B cell (primary cell): ENCODE measurements at regions of chr3 and their contacts with region 1.

Region 1: DNA sequence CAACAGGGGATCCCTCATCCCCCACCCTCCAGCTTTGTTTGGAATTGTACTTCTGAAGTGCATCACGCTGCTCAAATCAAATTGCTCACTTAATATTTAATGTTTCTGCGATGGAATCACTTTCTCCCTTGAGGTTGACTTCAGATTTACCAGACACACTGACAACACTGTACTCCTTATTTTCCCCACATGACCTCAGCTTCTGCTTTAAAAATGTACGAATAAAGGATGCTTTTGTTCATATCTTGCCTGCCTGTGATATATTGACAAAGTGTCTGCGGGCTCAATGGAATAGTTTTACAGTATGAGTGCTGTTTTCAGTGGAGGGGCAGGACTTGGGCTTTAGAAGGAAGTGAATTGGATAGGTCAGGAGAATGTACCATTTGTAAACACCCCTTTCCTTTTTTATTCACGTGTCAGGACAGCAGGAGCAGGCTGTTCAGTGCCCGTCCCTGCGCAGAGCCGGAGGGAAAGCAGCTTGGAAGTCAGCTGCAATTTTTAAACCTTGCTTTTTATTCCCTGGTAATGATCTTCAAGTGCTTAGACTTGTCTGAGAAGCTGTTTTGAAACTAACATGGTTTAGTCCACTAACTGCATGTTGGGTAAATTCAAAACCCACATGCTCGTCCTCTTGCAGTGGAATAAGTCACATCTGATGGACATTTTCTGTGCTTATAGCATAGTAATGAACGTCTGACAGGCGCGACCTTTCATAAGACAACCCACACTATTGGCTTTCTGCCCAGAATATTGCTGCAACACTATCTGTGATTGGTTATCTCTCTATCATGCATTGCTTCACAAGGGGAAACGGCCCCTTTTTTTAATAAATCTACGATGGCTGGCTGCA is 29.9 kb downstream of the MBNL1 start:
- DNase-seq: peak; percentile 77
- ATAC-seq: peak; percentile 76
- H3K4me3 ChIP-seq: peak overlapping the region in 1 of 5 experiments; percentile 47
- H3K4me3 Mint-ChIP-seq: peak overlapping the region; percentile 79
- H3K27ac ChIP-seq: peak overlapping the region; percentile 16 to 61
- H3K27ac Mint-ChIP-seq: peak overlapping the region; percentile 86
- H3K4me1 ChIP-seq: peaks cover 47 to 75% of the 10 kb centered on the region in 2 donors
- H3K4me1 Mint-ChIP-seq: peaks cover 73% of the 10 kb centered on the region
- H3K27me3 ChIP-seq: no peaks in the 10 kb centered on the region
- H3K27me3 Mint-ChIP-seq: no peaks in the 10 kb centered on the region
- CTCF ChIP-seq: no peak

Region 2: DNA sequence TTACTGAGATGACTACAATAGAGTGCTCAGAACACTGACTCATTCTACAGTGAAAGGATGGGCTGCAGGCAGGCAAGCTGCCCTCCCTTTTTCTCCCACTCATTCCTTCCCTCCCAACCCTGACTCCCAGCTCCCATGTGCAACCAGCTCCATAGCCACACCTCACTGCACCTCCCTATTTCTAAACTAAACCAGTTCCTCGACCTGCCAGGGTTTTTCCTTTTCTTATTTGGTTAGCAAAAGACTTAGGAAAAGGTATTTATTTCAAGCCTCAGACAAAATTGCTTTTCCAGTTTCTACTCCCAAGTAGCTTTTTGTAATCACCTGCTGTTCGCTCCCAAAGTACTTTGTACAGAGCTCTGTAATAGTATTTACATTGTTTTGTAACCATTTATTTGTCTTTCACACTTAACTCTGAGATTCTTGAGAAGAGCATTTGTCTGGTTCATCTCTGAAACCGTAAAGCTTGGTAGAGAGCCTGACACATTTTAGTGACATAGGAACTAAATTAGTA is 482.5 kb before region 1 on chr3:
- CTCF ChIA-PET with region 1: no interaction called
- POLR2A ChIA-PET with region 1: no interaction called
- intact Hi-C with region 1: no loop called
- DNase-seq: no peak
- ATAC-seq: no peak
- H3K4me3 ChIP-seq: no peak overlapping the region
- H3K4me3 Mint-ChIP-seq: no peak overlapping the region
- H3K27ac ChIP-seq: no peak overlapping the region
- H3K27ac Mint-ChIP-seq: no peak overlapping the region
- H3K4me1 ChIP-seq: no peaks in the 10 kb centered on the region
- H3K4me1 Mint-ChIP-seq: no peaks in the 10 kb centered on the region
- H3K27me3 ChIP-seq: no peaks in the 10 kb centered on the region
- H3K27me3 Mint-ChIP-seq: peaks cover 15% of the 10 kb centered on the region
- CTCF ChIP-seq: no peak

Region 3: DNA sequence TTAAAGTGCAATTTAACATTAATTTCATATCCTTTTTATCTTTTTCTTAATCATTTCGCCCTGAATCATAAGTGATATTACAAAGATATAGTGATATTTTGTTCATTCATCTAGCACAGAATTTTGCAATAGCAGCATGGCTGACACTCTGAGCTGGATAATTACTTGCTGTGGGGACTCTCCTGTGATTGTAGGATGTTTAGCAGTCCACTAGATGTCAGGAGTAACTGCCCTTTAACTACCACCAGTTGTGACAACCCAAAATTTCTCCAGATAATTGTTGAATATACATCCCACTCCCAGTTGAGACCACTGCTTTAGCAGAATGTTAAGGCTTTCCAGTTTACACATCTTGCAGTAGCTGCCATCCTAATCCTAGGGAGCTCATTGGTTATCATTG is 226.7 kb before region 1 on chr3:
- CTCF ChIA-PET with region 1: no interaction called
- POLR2A ChIA-PET with region 1: no interaction called
- intact Hi-C with region 1: loop called (anchors 10 kb)
- DNase-seq: peak; percentile 30
- ATAC-seq: no peak
- H3K4me3 ChIP-seq: no peak overlapping the region
- H3K4me3 Mint-ChIP-seq: no peak overlapping the region
- H3K27ac ChIP-seq: no peak overlapping the region
- H3K27ac Mint-ChIP-seq: no peak overlapping the region
- H3K4me1 ChIP-seq: no peaks in the 10 kb centered on the region
- H3K4me1 Mint-ChIP-seq: no peaks in the 10 kb centered on the region
- H3K27me3 ChIP-seq: peaks cover 0 to 3% (median 0%) of the 10 kb centered on the region in 4 experiments
- H3K27me3 Mint-ChIP-seq: no peaks in the 10 kb centered on the region
- CTCF ChIP-seq: peak; percentile 49

Region 4: GRCh38 chr3:152127058-152127457 is 171.6 kb before region 1 on chr3:
- CTCF ChIA-PET with region 1: no interaction called
- POLR2A ChIA-PET with region 1: no interaction called
- intact Hi-C with region 1: no loop called
- DNase-seq: no peak
- ATAC-seq: no peak
- H3K4me3 ChIP-seq: no peak overlapping the region
- H3K4me3 Mint-ChIP-seq: no peak overlapping the region
- H3K27ac ChIP-seq: no peak overlapping the region
- H3K27ac Mint-ChIP-seq: no peak overlapping the region
- H3K4me1 ChIP-seq: no peaks in the 10 kb centered on the region
- H3K4me1 Mint-ChIP-seq: peaks cover 4% of the 10 kb centered on the region
- H3K27me3 ChIP-seq: no peaks in the 10 kb centered on the region
- H3K27me3 Mint-ChIP-seq: no peaks in the 10 kb centered on the region
- CTCF ChIP-seq: no peak

Region 5: DNA sequence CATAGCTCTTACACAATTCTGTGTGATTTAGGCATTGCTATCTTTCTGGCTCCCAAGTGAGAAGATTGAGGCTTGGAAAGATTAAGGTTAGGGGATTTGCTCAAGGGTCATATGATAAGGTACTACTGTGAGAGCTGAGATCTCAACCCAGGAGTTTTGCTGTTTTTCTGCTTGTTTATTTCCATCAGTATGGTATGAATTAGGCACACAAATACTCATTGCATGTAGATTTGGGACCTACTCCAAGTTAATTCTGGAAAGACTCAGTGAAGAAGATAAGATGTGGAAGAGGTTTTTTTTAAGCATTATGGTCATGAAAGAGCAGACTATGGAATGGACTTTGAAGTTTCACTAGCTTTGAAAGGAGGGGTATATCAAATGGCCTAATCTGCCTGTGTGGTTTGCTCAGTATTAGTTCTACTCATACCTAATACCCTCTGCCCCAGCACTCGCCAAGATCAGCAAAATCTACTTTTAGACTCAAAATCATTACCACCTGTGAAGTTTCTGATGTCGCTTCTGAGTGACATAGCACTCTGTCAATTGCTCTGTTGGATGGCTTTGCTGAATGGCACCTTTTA is 17.4 kb before region 1 on chr3:
- CTCF ChIA-PET with region 1: no interaction called
- POLR2A ChIA-PET with region 1: no interaction called
- intact Hi-C with region 1: loop called (anchors 2 kb)
- DNase-seq: no peak
- ATAC-seq: no peak
- H3K4me3 ChIP-seq: peak overlapping the region in 1 of 5 experiments; percentile 5
- H3K4me3 Mint-ChIP-seq: peak overlapping the region; percentile 68
- H3K27ac ChIP-seq: peak overlapping the region in 1 of 2 donors; percentile 73
- H3K27ac Mint-ChIP-seq: peak overlapping the region; percentile 62
- H3K4me1 ChIP-seq: peaks cover 63 to 90% of the 10 kb centered on the region in 2 donors
- H3K4me1 Mint-ChIP-seq: peaks cover 79% of the 10 kb centered on the region
- H3K27me3 ChIP-seq: no peaks in the 10 kb centered on the region
- H3K27me3 Mint-ChIP-seq: no peaks in the 10 kb centered on the region
- CTCF ChIP-seq: no peak

Region 6: DNA sequence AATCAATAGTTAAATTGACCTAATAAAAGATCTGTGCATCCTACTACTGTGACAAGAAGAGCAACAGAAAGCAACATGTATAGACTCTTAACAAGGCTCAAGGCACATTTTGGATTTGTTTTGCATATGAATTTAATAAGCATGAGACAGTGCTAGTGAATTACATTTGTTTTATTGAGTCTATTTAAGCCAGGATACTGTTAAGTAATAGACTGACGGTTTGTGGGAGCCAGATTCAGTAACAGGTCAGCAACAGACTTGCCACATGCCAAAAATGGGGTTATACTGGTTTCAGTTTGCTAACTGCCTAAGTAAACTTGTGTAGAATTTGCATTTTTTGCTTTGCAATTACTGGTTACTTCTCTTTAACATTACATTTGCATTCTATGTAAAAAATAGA is 24.1 kb after region 1 on chr3:
- CTCF ChIA-PET with region 1: interaction called, 4 read pairs
- POLR2A ChIA-PET with region 1: no interaction called
- intact Hi-C with region 1: loop called (anchors 2 kb)
- DNase-seq: peak; percentile 39
- ATAC-seq: no peak
- H3K4me3 ChIP-seq: no peak overlapping the region
- H3K4me3 Mint-ChIP-seq: peak overlapping the region; percentile 55
- H3K27ac ChIP-seq: peak overlapping the region in 1 of 2 donors; percentile 66
- H3K27ac Mint-ChIP-seq: peak overlapping the region; percentile 18
- H3K4me1 ChIP-seq: peaks cover 24 to 53% of the 10 kb centered on the region in 2 donors
- H3K4me1 Mint-ChIP-seq: peaks cover 64% of the 10 kb centered on the region
- H3K27me3 ChIP-seq: no peaks in the 10 kb centered on the region
- H3K27me3 Mint-ChIP-seq: no peaks in the 10 kb centered on the region
- CTCF ChIP-seq: no peak

Region 7: GRCh38 chr3:152339881-152340505 is 41.4 kb after region 1 on chr3:
- CTCF ChIA-PET with region 1: no interaction called
- POLR2A ChIA-PET with region 1: no interaction called
- intact Hi-C with region 1: loop called (anchors 5 kb)
- DNase-seq: no peak
- ATAC-seq: no peak
- H3K4me3 ChIP-seq: no peak overlapping the region
- H3K4me3 Mint-ChIP-seq: no peak overlapping the region
- H3K27ac ChIP-seq: no peak overlapping the region
- H3K27ac Mint-ChIP-seq: peak overlapping the region; percentile 71
- H3K4me1 ChIP-seq: peaks cover 10 to 19% of the 10 kb centered on the region in 2 donors
- H3K4me1 Mint-ChIP-seq: peaks cover 56% of the 10 kb centered on the region
- H3K27me3 ChIP-seq: no peaks in the 10 kb centered on the region
- H3K27me3 Mint-ChIP-seq: no peaks in the 10 kb centered on the region
- CTCF ChIP-seq: no peak

Region 8: DNA sequence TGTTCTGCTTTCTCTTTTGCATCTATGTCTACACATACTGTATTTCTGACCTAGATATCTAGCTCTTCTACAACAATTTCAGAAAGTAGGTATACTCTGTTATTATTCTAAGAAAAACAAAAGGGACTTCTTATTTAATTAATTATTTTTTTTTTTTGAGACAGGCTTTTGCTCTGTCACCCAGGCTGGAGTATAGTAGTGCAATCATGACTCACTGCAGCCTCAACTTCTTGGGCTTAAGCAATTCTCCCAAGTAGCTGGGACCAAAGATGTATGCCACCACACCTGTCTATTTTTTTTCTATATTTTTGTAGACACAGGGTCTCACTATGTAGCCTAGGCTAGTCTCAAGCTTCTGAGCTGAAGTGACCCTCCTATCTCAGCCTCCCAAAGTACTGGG is 100.8 kb after region 1 on chr3:
- CTCF ChIA-PET with region 1: no interaction called
- POLR2A ChIA-PET with region 1: no interaction called
- intact Hi-C with region 1: no loop called
- DNase-seq: no peak
- ATAC-seq: no peak
- H3K4me3 ChIP-seq: no peak overlapping the region
- H3K4me3 Mint-ChIP-seq: no peak overlapping the region
- H3K27ac ChIP-seq: peak overlapping the region in 1 of 2 donors; percentile 61
- H3K27ac Mint-ChIP-seq: no peak overlapping the region
- H3K4me1 ChIP-seq: peaks cover 11 to 47% of the 10 kb centered on the region in 2 donors
- H3K4me1 Mint-ChIP-seq: peaks cover 60% of the 10 kb centered on the region
- H3K27me3 ChIP-seq: no peaks in the 10 kb centered on the region
- H3K27me3 Mint-ChIP-seq: no peaks in the 10 kb centered on the region
- CTCF ChIP-seq: no peak